CD4-positive, alpha-beta T cell (primary cell): ENCODE measurements at regions of chr18 and their contacts with region 1.

Region 1: GRCh38 chr18:2958819-2959298 is 54.1 kb downstream of the LPIN2 start:
- DNase-seq: peak in 3 of 14 experiments; percentile 41 to 71 (median 47)
- ATAC-seq: no peak
- H3K4me3 ChIP-seq: no peak overlapping the region
- H3K4me3 Mint-ChIP-seq: peak overlapping the region; percentile 83
- H3K27ac ChIP-seq: peak overlapping the region; percentile 39 to 88
- H3K27ac Mint-ChIP-seq: peak overlapping the region; percentile 96
- H3K4me1 ChIP-seq: peaks cover 76% of the 10 kb centered on the region
- H3K4me1 Mint-ChIP-seq: peaks cover 95% of the 10 kb centered on the region
- H3K27me3 ChIP-seq: no peaks in the 10 kb centered on the region
- H3K27me3 Mint-ChIP-seq: no peaks in the 10 kb centered on the region
- CTCF ChIP-seq: no peak

Region 2: DNA sequence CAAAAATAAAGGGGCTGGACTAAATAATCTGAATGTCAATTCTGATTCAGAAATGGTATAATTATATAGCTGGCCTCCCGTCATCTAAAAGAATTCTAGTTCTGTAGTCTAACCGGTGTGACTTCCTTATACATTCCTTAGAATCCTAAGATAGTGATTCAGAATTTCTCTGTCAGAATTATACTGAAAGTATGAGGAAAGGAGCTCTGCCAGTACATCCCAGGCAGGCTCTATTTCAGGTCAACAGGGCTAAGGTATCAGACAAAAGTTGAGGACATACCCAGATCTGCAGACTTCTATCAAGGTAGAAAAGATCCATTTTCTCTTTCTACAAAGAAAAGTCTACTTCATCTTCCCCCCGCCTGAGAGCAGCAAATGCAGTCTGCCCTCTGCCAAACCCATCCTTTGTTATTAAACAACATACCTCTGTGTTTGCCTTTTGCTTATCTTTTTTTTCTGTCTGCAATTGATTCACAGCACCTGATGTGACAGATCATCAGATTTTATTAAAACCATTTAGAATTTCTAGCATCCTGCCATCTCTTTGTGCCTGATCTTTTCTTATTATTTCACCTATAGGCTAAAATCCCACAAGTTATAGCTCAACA is 516.0 kb before region 1 on chr18:
- CTCF ChIA-PET with region 1: no interaction called
- POLR2A ChIA-PET with region 1: no interaction called
- intact Hi-C with region 1: no loop called
- DNase-seq: no peak
- ATAC-seq: no peak
- H3K4me3 ChIP-seq: no peak overlapping the region
- H3K4me3 Mint-ChIP-seq: no peak overlapping the region
- H3K27ac ChIP-seq: no peak overlapping the region
- H3K27ac Mint-ChIP-seq: no peak overlapping the region
- H3K4me1 ChIP-seq: no peaks in the 10 kb centered on the region
- H3K4me1 Mint-ChIP-seq: no peaks in the 10 kb centered on the region
- H3K27me3 ChIP-seq: no peaks in the 10 kb centered on the region
- H3K27me3 Mint-ChIP-seq: peaks cover 7% of the 10 kb centered on the region
- CTCF ChIP-seq: no peak

Region 3: GRCh38 chr18:2948038-2948437 is 10.8 kb before region 1 on chr18:
- CTCF ChIA-PET with region 1: interaction called, 25 read pairs
- POLR2A ChIA-PET with region 1: interaction called, 23 read pairs
- intact Hi-C with region 1: no loop called
- DNase-seq: peak in 2 of 14 experiments; percentile 24 to 31
- ATAC-seq: peak; percentile 56
- H3K4me3 ChIP-seq: no peak overlapping the region
- H3K4me3 Mint-ChIP-seq: no peak overlapping the region
- H3K27ac ChIP-seq: no peak overlapping the region
- H3K27ac Mint-ChIP-seq: peak overlapping the region; percentile 51
- H3K4me1 ChIP-seq: peaks cover 13% of the 10 kb centered on the region
- H3K4me1 Mint-ChIP-seq: peaks cover 72% of the 10 kb centered on the region
- H3K27me3 ChIP-seq: no peaks in the 10 kb centered on the region
- H3K27me3 Mint-ChIP-seq: no peaks in the 10 kb centered on the region
- CTCF ChIP-seq: no peak

Region 4: DNA sequence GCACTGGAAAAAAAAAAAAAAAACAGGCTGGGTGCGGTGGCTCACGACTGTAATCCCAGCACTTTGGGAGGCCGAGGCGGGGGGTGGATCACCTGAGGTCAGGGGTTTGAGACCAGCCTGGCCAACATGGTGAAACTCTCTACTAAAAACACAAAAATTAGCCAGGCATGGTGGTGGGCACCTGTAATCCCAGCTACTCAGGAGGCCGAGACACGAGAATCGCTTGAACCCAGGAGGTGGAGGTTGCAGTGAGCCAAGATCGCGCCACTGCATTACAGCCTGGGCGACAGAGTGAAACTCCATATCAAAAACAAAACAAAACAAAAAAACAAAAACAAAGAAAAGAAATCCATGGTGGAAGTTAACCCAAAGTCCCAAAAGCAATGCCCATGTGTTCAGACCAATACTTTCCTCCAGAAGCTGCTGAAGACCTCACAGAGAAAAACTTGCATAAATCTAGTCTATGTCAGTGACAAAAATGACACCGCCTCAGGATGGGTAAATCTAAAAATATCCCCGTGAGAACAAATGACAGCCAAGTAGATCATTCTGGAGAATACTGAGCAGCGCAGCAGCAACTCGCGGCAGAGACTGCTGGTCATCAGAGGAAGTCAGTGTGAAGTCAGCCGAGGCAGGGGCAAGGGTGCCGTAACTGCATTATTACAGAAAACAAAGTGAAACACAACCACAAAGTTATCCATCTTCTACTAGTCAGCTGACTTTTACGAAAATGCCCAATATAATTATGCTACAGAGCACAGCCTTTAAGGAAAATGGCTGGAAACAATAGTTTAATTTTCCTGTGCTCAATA is 13.1 kb after region 1 on chr18:
- CTCF ChIA-PET with region 1: interaction called, 9 read pairs
- POLR2A ChIA-PET with region 1: interaction called, 225 read pairs
- intact Hi-C with region 1: loop called (anchors 1 to 2 kb)
- DNase-seq: peak; percentile 42 to 91 (median 62)
- ATAC-seq: peak; percentile 73
- H3K4me3 ChIP-seq: peak overlapping the region; percentile 45
- H3K4me3 Mint-ChIP-seq: peak overlapping the region; percentile 92
- H3K27ac ChIP-seq: peak overlapping the region; percentile 81 to 89
- H3K27ac Mint-ChIP-seq: peak overlapping the region; percentile 96
- H3K4me1 ChIP-seq: peaks cover 79% of the 10 kb centered on the region
- H3K4me1 Mint-ChIP-seq: peaks cover 91% of the 10 kb centered on the region
- H3K27me3 ChIP-seq: no peaks in the 10 kb centered on the region
- H3K27me3 Mint-ChIP-seq: no peaks in the 10 kb centered on the region
- CTCF ChIP-seq: no peak

Region 5: GRCh38 chr18:2978646-2979045 is 19.8 kb after region 1 on chr18:
- CTCF ChIA-PET with region 1: interaction called, 17 read pairs
- POLR2A ChIA-PET with region 1: interaction called, 225 read pairs
- intact Hi-C with region 1: loop called (anchors 2 kb)
- DNase-seq: peak in 4 of 14 experiments; percentile 39 to 63 (median 56)
- ATAC-seq: peak; percentile 10
- H3K4me3 ChIP-seq: peak overlapping the region; percentile 41
- H3K4me3 Mint-ChIP-seq: peak overlapping the region; percentile 88
- H3K27ac ChIP-seq: peak overlapping the region; percentile 77 to 80
- H3K27ac Mint-ChIP-seq: peak overlapping the region; percentile 89
- H3K4me1 ChIP-seq: peaks cover 66% of the 10 kb centered on the region
- H3K4me1 Mint-ChIP-seq: peaks cover 90% of the 10 kb centered on the region
- H3K27me3 ChIP-seq: no peaks in the 10 kb centered on the region
- H3K27me3 Mint-ChIP-seq: no peaks in the 10 kb centered on the region
- CTCF ChIP-seq: no peak

Region 6: GRCh38 chr18:2985628-2986027 is 26.8 kb after region 1 on chr18:
- CTCF ChIA-PET with region 1: interaction called, 17 read pairs
- POLR2A ChIA-PET with region 1: interaction called, 169 read pairs
- intact Hi-C with region 1: loop called in 1 of 2 experiments (anchors 1 kb)
- DNase-seq: peak in 4 of 14 experiments; percentile 25 to 77 (median 75)
- ATAC-seq: peak; percentile 69
- H3K4me3 ChIP-seq: no peak overlapping the region
- H3K4me3 Mint-ChIP-seq: no peak overlapping the region
- H3K27ac ChIP-seq: no peak overlapping the region
- H3K27ac Mint-ChIP-seq: peak overlapping the region; percentile 89
- H3K4me1 ChIP-seq: peaks cover 23% of the 10 kb centered on the region
- H3K4me1 Mint-ChIP-seq: peaks cover 79% of the 10 kb centered on the region
- H3K27me3 ChIP-seq: no peaks in the 10 kb centered on the region
- H3K27me3 Mint-ChIP-seq: no peaks in the 10 kb centered on the region
- CTCF ChIP-seq: peak; percentile 74

Region 7: GRCh38 chr18:3012964-3013804 is 54.3 kb after region 1 on chr18 and contains the start of gene LPIN2:
- CTCF ChIA-PET with region 1: no interaction called
- POLR2A ChIA-PET with region 1: no interaction called
- intact Hi-C with region 1: loop called in 1 of 2 experiments (anchors 5 kb)
- DNase-seq: peak; percentile 93 to 99 (median 96)
- ATAC-seq: peak; percentile 91
- H3K4me3 ChIP-seq: peak within 1 kb of the TSS; percentile 68
- H3K4me3 Mint-ChIP-seq: peak within 1 kb of the TSS; percentile 94
- H3K27ac ChIP-seq: peak within 1 kb of the TSS; percentile 34 to 59
- H3K27ac Mint-ChIP-seq: peak within 1 kb of the TSS; percentile 92
- H3K4me1 ChIP-seq: peaks cover 74% of the 10 kb centered on the region
- H3K4me1 Mint-ChIP-seq: peaks cover 72% of the 10 kb centered on the region
- H3K27me3 ChIP-seq: no peaks in the 10 kb centered on the region
- H3K27me3 Mint-ChIP-seq: no peaks in the 10 kb centered on the region
- CTCF ChIP-seq: no peak
- total RNA-seq, gene LPIN2: 48.7 to 49.0 TPM

Region 8: GRCh38 chr18:3782901-3783300 is 824.0 kb after region 1 on chr18:
- CTCF ChIA-PET with region 1: no interaction called
- POLR2A ChIA-PET with region 1: no interaction called
- intact Hi-C with region 1: no loop called
- DNase-seq: no peak
- ATAC-seq: no peak
- H3K4me3 ChIP-seq: no peak overlapping the region
- H3K4me3 Mint-ChIP-seq: no peak overlapping the region
- H3K27ac ChIP-seq: no peak overlapping the region
- H3K27ac Mint-ChIP-seq: no peak overlapping the region
- H3K4me1 ChIP-seq: no peaks in the 10 kb centered on the region
- H3K4me1 Mint-ChIP-seq: no peaks in the 10 kb centered on the region
- H3K27me3 ChIP-seq: peaks cover 0 to 2% of the 10 kb centered on the region in 2 experiments
- H3K27me3 Mint-ChIP-seq: peaks cover 24% of the 10 kb centered on the region
- CTCF ChIP-seq: no peak